ENCODE measurements at regions of chr20 and their contacts with region 1.

Region 1: GRCh38 chr20:33666293-33667244 is at the start of gene ACTL10:
- DNase-seq: peak; percentile 89
- ATAC-seq: peak; percentile 59
- H3K4me3 Mint-ChIP-seq: peak within 1 kb of the TSS; percentile 75
- H3K27ac Mint-ChIP-seq: peak within 1 kb of the TSS; percentile 90
- H3K4me1 Mint-ChIP-seq: peaks cover 31% of the 10 kb centered on the region
- H3K27me3 Mint-ChIP-seq: no peaks in the 10 kb centered on the region
- total RNA-seq, gene ACTL10: 0.91 to 1.7 TPM

Region 2: DNA sequence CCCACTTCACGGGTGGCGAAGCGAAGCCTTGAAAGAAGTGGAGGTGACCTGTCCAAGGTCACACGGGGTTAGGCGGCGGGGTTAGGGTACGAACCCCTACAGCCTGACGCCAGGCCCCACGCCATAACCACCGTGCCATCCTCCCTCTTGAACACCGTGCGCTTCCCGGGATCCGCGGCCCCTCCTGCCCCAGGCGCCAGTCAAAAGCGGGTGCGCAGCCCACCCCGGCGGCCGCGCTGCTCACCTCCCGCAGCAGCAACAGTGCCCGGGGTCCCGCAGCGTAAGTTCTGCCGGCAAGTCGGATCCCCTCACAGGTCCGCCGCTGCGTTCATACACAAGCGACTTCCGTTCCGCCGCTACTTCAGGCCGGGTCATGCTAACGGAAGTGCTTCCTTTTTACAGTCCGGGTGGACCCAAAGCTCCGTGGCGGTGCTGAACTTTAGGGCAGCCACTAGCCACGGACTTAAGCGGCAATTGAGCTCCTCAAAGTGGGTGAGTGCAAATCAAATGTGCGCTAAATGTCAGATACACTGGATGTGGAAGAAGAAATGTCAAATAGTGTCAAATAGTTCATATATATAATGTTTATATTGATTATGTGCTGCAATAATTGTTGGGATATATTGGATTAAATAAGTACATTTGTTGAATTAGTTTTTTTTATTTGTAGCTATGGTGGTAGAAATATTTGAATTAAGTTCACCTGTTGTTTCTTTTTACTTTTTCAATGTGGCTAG is 265.2 kb before region 1 on chr20 and contains the start of gene CDK5RAP1:
- CTCF ChIA-PET with region 1: interaction called, 3 read pairs
- POLR2A ChIA-PET with region 1: no interaction called
- intact Hi-C with region 1: loop called in 1 of 2 experiments (anchors 1 kb)
- DNase-seq: peak; percentile 92
- ATAC-seq: peak; percentile 98
- H3K4me3 Mint-ChIP-seq: peak within 1 kb of the TSS; percentile 79
- H3K27ac Mint-ChIP-seq: peak within 1 kb of the TSS; percentile 90
- H3K4me1 Mint-ChIP-seq: peaks cover 42% of the 10 kb centered on the region
- H3K27me3 Mint-ChIP-seq: no peaks in the 10 kb centered on the region
- total RNA-seq, gene CDK5RAP1: 31.3 to 41.5 TPM

Region 3: GRCh38 chr20:33460711-33461110 is 205.9 kb before region 1 on chr20:
- CTCF ChIA-PET with region 1: interaction called, 19 read pairs
- POLR2A ChIA-PET with region 1: no interaction called
- intact Hi-C with region 1: loop called (anchors 1 kb)
- DNase-seq: peak; percentile 35
- ATAC-seq: peak; percentile 43
- H3K4me3 Mint-ChIP-seq: no peak overlapping the region
- H3K27ac Mint-ChIP-seq: no peak overlapping the region
- H3K4me1 Mint-ChIP-seq: no peaks in the 10 kb centered on the region
- H3K27me3 Mint-ChIP-seq: no peaks in the 10 kb centered on the region

Region 4: GRCh38 chr20:33489495-33490022 is 177.0 kb before region 1 on chr20:
- CTCF ChIA-PET with region 1: interaction called, 5 read pairs
- POLR2A ChIA-PET with region 1: interaction called, 6 read pairs
- intact Hi-C with region 1: loop called in 1 of 2 experiments (anchors 1 kb)
- DNase-seq: peak; percentile 99
- ATAC-seq: peak; percentile 98
- H3K4me3 Mint-ChIP-seq: peak overlapping the region; percentile 85
- H3K27ac Mint-ChIP-seq: peak overlapping the region; percentile 78
- H3K4me1 Mint-ChIP-seq: peaks cover 6% of the 10 kb centered on the region
- H3K27me3 Mint-ChIP-seq: no peaks in the 10 kb centered on the region

Region 5: GRCh38 chr20:33653218-33653899 is 13.2 kb before region 1 on chr20:
- CTCF ChIA-PET with region 1: interaction called, 10 read pairs
- POLR2A ChIA-PET with region 1: interaction called, 5 read pairs
- intact Hi-C with region 1: loop called in 1 of 2 experiments (anchors 1 kb)
- DNase-seq: peak; percentile 61
- ATAC-seq: peak; percentile 34
- H3K4me3 Mint-ChIP-seq: no peak overlapping the region
- H3K27ac Mint-ChIP-seq: peak overlapping the region; percentile 78
- H3K4me1 Mint-ChIP-seq: peaks cover 41% of the 10 kb centered on the region
- H3K27me3 Mint-ChIP-seq: no peaks in the 10 kb centered on the region

Region 6: GRCh38 chr20:33719989-33720709 is 53.6 kb after region 1 on chr20 and contains the start of gene PXMP4:
- CTCF ChIA-PET with region 1: interaction called, 11 read pairs
- POLR2A ChIA-PET with region 1: interaction called, 4 read pairs
- intact Hi-C with region 1: loop called in 1 of 2 experiments (anchors 2 kb)
- DNase-seq: peak; percentile 92
- ATAC-seq: peak; percentile 99
- H3K4me3 Mint-ChIP-seq: peak within 1 kb of the TSS; percentile 88
- H3K27ac Mint-ChIP-seq: peak within 1 kb of the TSS; percentile 83
- H3K4me1 Mint-ChIP-seq: peaks cover 18% of the 10 kb centered on the region
- H3K27me3 Mint-ChIP-seq: no peaks in the 10 kb centered on the region
- total RNA-seq, gene PXMP4: 8.8 to 10.2 TPM

Measured in activated CD4-positive, alpha-beta T cell treated with anti-CD3 and anti-CD28 coated beads for 36 hours (primary cell).